GM10248 (cell line): ENCODE measurements at regions of chr4 and their contacts with region 1.

Region 1: GRCh38 chr4:89266128-89266527 is 41.5 kb downstream of the GPRIN3 start:
- DNase-seq: no peak
- CTCF ChIP-seq: no peak

Region 2: GRCh38 chr4:89254847-89255246 is 11.3 kb before region 1 on chr4:
- CTCF ChIA-PET with region 1: interaction called, 20 read pairs
- POLR2A ChIA-PET with region 1: no interaction called
- DNase-seq: peak; percentile 35
- CTCF ChIP-seq: peak; percentile 77

Region 3: DNA sequence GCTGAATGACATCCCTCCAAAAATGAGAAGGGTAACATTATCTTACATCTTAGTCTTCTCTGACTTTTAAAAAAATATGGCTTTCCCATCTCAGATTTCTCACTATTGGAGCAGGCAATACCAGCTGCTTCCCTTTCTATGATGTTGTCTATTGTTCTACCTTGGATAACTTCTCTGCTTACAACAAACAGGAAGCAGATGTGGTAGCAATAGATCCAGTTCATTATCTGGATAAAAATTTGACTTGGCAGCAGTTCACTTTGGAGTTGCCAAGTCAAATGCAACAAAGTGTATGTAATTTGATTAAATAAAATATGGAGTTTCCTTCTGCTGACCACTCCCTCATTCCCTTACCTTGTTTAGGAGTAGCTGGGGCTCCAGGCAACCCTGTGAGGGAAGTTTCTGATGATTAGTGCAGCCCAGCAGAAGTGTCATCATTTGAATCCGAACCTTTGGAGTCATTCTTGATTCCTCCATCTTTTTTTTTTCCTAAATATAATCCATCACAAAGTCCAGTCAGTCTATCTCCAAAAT is 113.5 kb after region 1 on chr4:
- CTCF ChIA-PET with region 1: no interaction called
- POLR2A ChIA-PET with region 1: no interaction called
- DNase-seq: no peak
- CTCF ChIP-seq: no peak